Activated T-helper 2 cell treated with anti-CD3 and anti-CD28 coated beads, Interferon-gamma antibody, Interleukin-2, Interleukin-4, amounts not matched to agents 10 μg/mL and 5 μg/mL and 100 μg/mL, durations not matched to agents 14 hours and 24 hours and 36 hours (primary cell): ENCODE measurements at regions of chr2 and their contacts with region 1.

Region 1: GRCh38 chr2:64679673-64680425 is 26.1 kb upstream of the SERTAD2 start:
- DNase-seq: no peak
- H3K4me3 Mint-ChIP-seq: peak overlapping the region; percentile 61
- H3K27ac Mint-ChIP-seq: peak overlapping the region; percentile 93
- H3K4me1 Mint-ChIP-seq: peaks cover 59% of the 10 kb centered on the region
- H3K27me3 Mint-ChIP-seq: no peaks in the 10 kb centered on the region

Region 2: DNA sequence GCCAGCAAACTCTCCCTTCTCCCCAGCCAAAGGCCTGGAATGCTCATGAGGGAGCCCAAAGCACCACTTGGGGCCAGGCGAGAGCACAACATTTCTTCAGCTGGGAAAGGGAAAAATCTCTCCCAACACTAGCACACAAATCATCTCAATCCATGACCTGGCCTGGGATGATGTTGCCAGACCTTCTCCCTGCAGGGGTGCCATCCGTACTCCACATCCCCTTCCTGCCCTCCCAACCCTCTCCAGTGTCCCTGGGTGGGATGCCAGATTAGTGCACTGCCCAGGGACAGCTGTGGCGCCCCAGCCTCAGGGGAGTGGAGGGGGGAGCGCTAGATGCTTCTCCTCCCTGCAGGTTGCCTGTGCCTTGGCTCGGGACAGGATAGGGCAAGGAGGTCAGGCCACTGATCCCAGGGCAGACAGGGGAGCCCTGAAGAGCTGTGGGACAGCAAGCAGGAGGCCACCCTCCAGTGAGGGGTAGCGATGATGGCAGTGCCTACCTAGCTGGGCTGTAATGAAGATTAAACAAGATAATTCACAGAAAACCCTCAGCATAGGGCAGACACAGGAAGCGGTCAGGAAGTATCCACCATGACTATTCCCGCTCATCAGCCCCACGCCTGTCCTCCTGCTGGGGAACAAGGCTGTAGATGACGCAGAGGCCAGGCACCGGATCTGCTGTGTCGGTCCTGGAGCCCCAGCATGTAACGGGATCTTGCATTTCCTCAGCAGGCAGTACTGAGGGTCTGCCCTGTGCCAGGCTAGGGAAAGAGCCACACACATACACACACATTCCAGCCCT is 57.2 kb before region 1 on chr2:
- intact Hi-C with region 1: no loop called
- DNase-seq: no peak
- H3K4me3 Mint-ChIP-seq: no peak overlapping the region
- H3K27ac Mint-ChIP-seq: no peak overlapping the region
- H3K4me1 Mint-ChIP-seq: no peaks in the 10 kb centered on the region
- H3K27me3 Mint-ChIP-seq: peaks cover 5% of the 10 kb centered on the region

Region 3: GRCh38 chr2:64730551-64731262 is 50.9 kb after region 1 on chr2:
- intact Hi-C with region 1: loop called (anchors 2 kb)
- DNase-seq: peak; percentile 31
- H3K4me3 Mint-ChIP-seq: peak overlapping the region; percentile 76
- H3K27ac Mint-ChIP-seq: peak overlapping the region; percentile 94
- H3K4me1 Mint-ChIP-seq: peaks cover 75% of the 10 kb centered on the region
- H3K27me3 Mint-ChIP-seq: no peaks in the 10 kb centered on the region